Activated CD4-positive, alpha-beta T cell treated with anti-CD3 and anti-CD28 coated beads for 36 hours (primary cell): ENCODE measurements at regions of chr22 and their contacts with region 1.

Region 1: GRCh38 chr22:39532215-39533071 is at the start of gene RPS19BP1:
- DNase-seq: peak; percentile 100
- ATAC-seq: peak; percentile 89
- H3K4me3 Mint-ChIP-seq: peak within 1 kb of the TSS; percentile 98
- H3K27ac Mint-ChIP-seq: peak within 1 kb of the TSS; percentile 92
- H3K4me1 Mint-ChIP-seq: peaks cover 51% of the 10 kb centered on the region
- H3K27me3 Mint-ChIP-seq: no peaks in the 10 kb centered on the region
- total RNA-seq, gene RPS19BP1: 42.8 to 68.8 TPM

Region 2: GRCh38 chr22:39152511-39153219 is 379.8 kb before region 1 on chr22 and contains the start of gene CBX7:
- CTCF ChIA-PET with region 1: no interaction called
- POLR2A ChIA-PET with region 1: no interaction called
- intact Hi-C with region 1: no loop called
- DNase-seq: peak; percentile 95
- ATAC-seq: peak; percentile 83
- H3K4me3 Mint-ChIP-seq: peak within 1 kb of the TSS; percentile 76
- H3K27ac Mint-ChIP-seq: peak within 1 kb of the TSS; percentile 72
- H3K4me1 Mint-ChIP-seq: peaks cover 40% of the 10 kb centered on the region
- H3K27me3 Mint-ChIP-seq: peaks cover 13% of the 10 kb centered on the region
- total RNA-seq, gene CBX7: 19.9 to 20.3 TPM

Region 3: GRCh38 chr22:39170825-39171622 is 361.4 kb before region 1 on chr22:
- CTCF ChIA-PET with region 1: interaction called, 4 read pairs
- POLR2A ChIA-PET with region 1: interaction called, 7 read pairs
- intact Hi-C with region 1: loop called in 1 of 2 experiments (anchors 2 kb)
- DNase-seq: peak; percentile 92
- ATAC-seq: peak; percentile 83
- H3K4me3 Mint-ChIP-seq: no peak overlapping the region
- H3K27ac Mint-ChIP-seq: no peak overlapping the region
- H3K4me1 Mint-ChIP-seq: peaks cover 42% of the 10 kb centered on the region
- H3K27me3 Mint-ChIP-seq: no peaks in the 10 kb centered on the region

Region 4: GRCh38 chr22:39395936-39396796 is 136.3 kb before region 1 on chr22:
- CTCF ChIA-PET with region 1: interaction called, 13 read pairs
- POLR2A ChIA-PET with region 1: interaction called, 3 read pairs
- intact Hi-C with region 1: loop called in 1 of 2 experiments (anchors 1 kb)
- DNase-seq: no peak
- ATAC-seq: no peak
- H3K4me3 Mint-ChIP-seq: no peak overlapping the region
- H3K27ac Mint-ChIP-seq: no peak overlapping the region
- H3K4me1 Mint-ChIP-seq: peaks cover 9% of the 10 kb centered on the region
- H3K27me3 Mint-ChIP-seq: no peaks in the 10 kb centered on the region

Region 5: DNA sequence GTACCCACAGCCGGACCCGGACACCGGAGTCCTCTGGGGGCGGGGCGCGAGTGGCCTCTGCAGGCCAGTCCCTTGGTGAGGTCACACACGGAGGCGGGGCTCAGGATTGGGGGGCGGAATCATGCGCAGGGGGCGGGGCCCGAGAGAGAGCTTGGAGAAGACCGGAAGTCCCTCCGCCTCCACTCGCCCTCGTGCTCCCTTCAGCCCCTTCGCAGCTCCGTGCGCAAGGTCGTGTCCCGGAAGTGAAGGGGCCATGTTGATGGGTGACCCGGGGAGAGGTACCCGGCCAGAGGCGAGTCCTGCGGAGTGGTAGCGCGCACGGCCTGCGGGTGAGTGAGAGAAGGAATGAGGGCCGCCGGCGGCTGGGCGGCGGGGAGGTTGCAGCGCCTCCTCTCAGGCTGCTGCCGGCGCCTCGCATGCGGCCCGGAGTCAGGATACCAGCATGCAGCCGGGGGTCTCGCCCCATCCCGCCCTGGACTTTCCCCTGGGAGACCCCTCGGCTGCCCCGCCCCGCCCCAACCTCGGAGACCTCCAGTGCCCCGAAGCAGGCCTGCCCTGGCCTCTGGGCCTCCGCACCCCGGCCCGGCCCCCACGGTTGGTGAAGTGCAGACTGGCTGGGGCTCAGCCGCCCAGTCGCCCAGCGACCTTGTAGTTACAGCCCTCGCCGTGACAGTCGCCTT is 30.2 kb before region 1 on chr22 and contains the start of gene MIEF1:
- CTCF ChIA-PET with region 1: interaction called, 50 read pairs
- POLR2A ChIA-PET with region 1: interaction called, 6 read pairs
- intact Hi-C with region 1: loop called (anchors 1 kb)
- DNase-seq: peak; percentile 98
- ATAC-seq: peak; percentile 98
- H3K4me3 Mint-ChIP-seq: peak within 1 kb of the TSS; percentile 76
- H3K27ac Mint-ChIP-seq: peak within 1 kb of the TSS; percentile 94
- H3K4me1 Mint-ChIP-seq: peaks cover 35% of the 10 kb centered on the region
- H3K27me3 Mint-ChIP-seq: no peaks in the 10 kb centered on the region
- total RNA-seq, gene MIEF1: 43.2 to 44.9 TPM

Region 6: GRCh38 chr22:39900306-39901227 is 368.1 kb after region 1 on chr22 and contains the start of gene GRAP2:
- CTCF ChIA-PET with region 1: no interaction called
- POLR2A ChIA-PET with region 1: no interaction called
- intact Hi-C with region 1: loop called (anchors 5 to 10 kb)
- DNase-seq: peak; percentile 77
- ATAC-seq: peak; percentile 89
- H3K4me3 Mint-ChIP-seq: peak within 1 kb of the TSS; percentile 86
- H3K27ac Mint-ChIP-seq: peak within 1 kb of the TSS; percentile 100
- H3K4me1 Mint-ChIP-seq: peaks cover 20% of the 10 kb centered on the region
- H3K27me3 Mint-ChIP-seq: no peaks in the 10 kb centered on the region
- total RNA-seq, gene GRAP2: 40.6 to 45.5 TPM

Region 7: DNA sequence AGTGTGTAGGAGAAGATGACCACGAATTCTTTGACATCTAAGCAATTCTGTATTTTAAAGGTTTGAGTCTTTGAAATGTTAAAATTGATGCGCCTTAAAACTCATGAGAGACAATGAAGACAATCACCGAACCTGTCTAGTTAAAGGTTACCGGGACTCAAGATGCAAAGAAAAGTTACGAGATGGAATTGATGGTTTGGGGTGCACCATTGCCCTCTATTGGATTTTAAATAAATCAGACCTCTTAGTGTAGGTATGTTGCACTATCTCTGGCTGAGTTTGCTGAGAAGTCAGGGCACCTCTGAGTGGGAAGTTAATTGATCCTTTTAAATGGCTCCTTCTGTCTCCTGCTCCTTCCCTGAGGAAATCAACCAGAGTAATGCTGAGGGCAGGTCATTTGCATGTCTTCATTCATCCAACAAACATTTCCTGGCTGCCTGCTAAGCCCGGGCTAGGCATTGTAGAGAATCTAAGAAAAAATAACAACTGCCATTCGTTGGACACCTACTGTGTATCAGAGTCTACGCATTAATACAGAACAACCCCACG is 408.4 kb after region 1 on chr22:
- CTCF ChIA-PET with region 1: interaction called, 3 read pairs
- POLR2A ChIA-PET with region 1: no interaction called
- intact Hi-C with region 1: loop called (anchors 2 to 10 kb)
- DNase-seq: no peak
- ATAC-seq: peak; percentile 39
- H3K4me3 Mint-ChIP-seq: peak overlapping the region; percentile 21
- H3K27ac Mint-ChIP-seq: peak overlapping the region; percentile 70
- H3K4me1 Mint-ChIP-seq: peaks cover 94% of the 10 kb centered on the region
- H3K27me3 Mint-ChIP-seq: no peaks in the 10 kb centered on the region

Region 8: GRCh38 chr22:40044102-40044869 is 511.8 kb after region 1 on chr22:
- CTCF ChIA-PET with region 1: interaction called, 16 read pairs
- POLR2A ChIA-PET with region 1: interaction called, 3 read pairs
- intact Hi-C with region 1: loop called in 1 of 2 experiments (anchors 1 kb)
- DNase-seq: peak; percentile 98
- ATAC-seq: peak; percentile 91
- H3K4me3 Mint-ChIP-seq: peak overlapping the region; percentile 87
- H3K27ac Mint-ChIP-seq: peak overlapping the region; percentile 99
- H3K4me1 Mint-ChIP-seq: peaks cover 24% of the 10 kb centered on the region
- H3K27me3 Mint-ChIP-seq: peaks cover 2% of the 10 kb centered on the region